CD8-positive, alpha-beta memory T cell (primary cell): ENCODE measurements at regions of chr12 and their contacts with region 1.

Region 1: DNA sequence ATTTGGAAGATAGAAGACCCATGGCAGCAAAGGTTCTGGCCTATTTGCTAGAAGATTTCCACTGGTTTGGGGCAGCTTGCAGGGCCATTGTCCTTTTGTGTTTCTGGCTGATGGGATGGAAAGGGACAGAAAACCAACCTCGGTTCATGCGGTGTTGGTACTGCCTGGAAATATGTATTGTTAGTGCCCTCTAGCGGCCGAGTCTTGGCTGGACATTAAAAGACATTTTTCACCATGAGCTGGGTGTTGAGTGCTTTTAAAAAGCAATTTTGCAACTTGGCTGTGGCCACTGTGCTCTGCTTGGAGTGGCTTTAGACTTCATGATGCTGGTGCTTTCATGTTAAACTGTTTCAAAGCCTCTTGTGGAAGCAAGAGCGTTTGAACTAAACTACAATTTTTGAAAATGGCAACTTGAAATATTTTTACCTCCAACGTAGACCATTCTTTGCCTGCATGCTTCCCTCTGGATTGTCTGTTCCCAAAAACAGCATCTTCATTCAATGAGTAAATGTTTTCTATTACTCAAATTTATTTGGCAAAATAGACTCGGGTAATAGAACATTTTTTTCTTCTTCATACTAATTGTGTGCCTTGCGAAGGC is 102.7 kb upstream of the TBX5 start:
- DNase-seq: peak; percentile 12 to 61 (median 20)
- H3K4me3 ChIP-seq: no peak overlapping the region
- H3K4me3 Mint-ChIP-seq: no peak overlapping the region
- H3K27ac ChIP-seq: no peak overlapping the region
- H3K27ac Mint-ChIP-seq: no peak overlapping the region
- H3K4me1 ChIP-seq: no peaks in the 10 kb centered on the region
- H3K4me1 Mint-ChIP-seq: no peaks in the 10 kb centered on the region
- H3K27me3 ChIP-seq: no peaks in the 10 kb centered on the region
- H3K27me3 Mint-ChIP-seq: peaks cover 3 to 16% of the 10 kb centered on the region in 2 donors

Region 2: GRCh38 chr12:113965951-113966797 is 542.5 kb before region 1 on chr12 and contains the start of gene RBM19:
- CTCF ChIA-PET with region 1: interaction called, 13 read pairs
- POLR2A ChIA-PET with region 1: no interaction called
- DNase-seq: peak; percentile 95 to 98 (median 97)
- H3K4me3 ChIP-seq: peak within 1 kb of the TSS; percentile 84
- H3K4me3 Mint-ChIP-seq: peak within 1 kb of the TSS; percentile 95 to 100 (median 100)
- H3K27ac ChIP-seq: peak within 1 kb of the TSS; percentile 49
- H3K27ac Mint-ChIP-seq: peak within 1 kb of the TSS; percentile 75 to 99 (median 97)
- H3K4me1 ChIP-seq: peaks cover 18% of the 10 kb centered on the region
- H3K4me1 Mint-ChIP-seq: peaks cover 37 to 52% (median 52%) of the 10 kb centered on the region in 3 donors
- H3K27me3 ChIP-seq: no peaks in the 10 kb centered on the region
- H3K27me3 Mint-ChIP-seq: peaks cover 0 to 1% of the 10 kb centered on the region in 2 donors
- total RNA-seq, gene RBM19: 109 to 114 TPM